CD4-positive, alpha-beta memory T cell (primary cell): ENCODE measurements at regions of chr3 and their contacts with region 1.

Region 1: GRCh38 chr3:48989796-48990635 is at the start of gene P4HTM:
- DNase-seq: peak; percentile 46 to 84 (median 54)
- H3K4me3 ChIP-seq: peak within 1 kb of the TSS; percentile 76 to 86
- H3K4me3 Mint-ChIP-seq: peak within 1 kb of the TSS; percentile 94 to 97 (median 94)
- H3K27ac ChIP-seq: peak within 1 kb of the TSS; percentile 65
- H3K27ac Mint-ChIP-seq: peak within 1 kb of the TSS; percentile 90 to 96 (median 93)
- H3K4me1 ChIP-seq: peaks cover 45% of the 10 kb centered on the region
- H3K4me1 Mint-ChIP-seq: peaks cover 30 to 57% (median 43%) of the 10 kb centered on the region in 4 donors
- H3K27me3 ChIP-seq: no peaks in the 10 kb centered on the region
- H3K27me3 Mint-ChIP-seq: no peaks in the 10 kb centered on the region
- total RNA-seq, gene P4HTM: 79.3 to 87.3 TPM

Region 2: GRCh38 chr3:48974076-48974864 is 15.7 kb before region 1 on chr3:
- CTCF ChIA-PET with region 1: interaction called, 10 read pairs
- POLR2A ChIA-PET with region 1: interaction called, 4 read pairs
- intact Hi-C with region 1: no loop called
- DNase-seq: no peak
- H3K4me3 ChIP-seq: no peak overlapping the region
- H3K4me3 Mint-ChIP-seq: no peak overlapping the region
- H3K27ac ChIP-seq: no peak overlapping the region
- H3K27ac Mint-ChIP-seq: peak overlapping the region in 2 of 7 donors; percentile 14 to 46
- H3K4me1 ChIP-seq: no peaks in the 10 kb centered on the region
- H3K4me1 Mint-ChIP-seq: peaks cover 0 to 8% (median 0%) of the 10 kb centered on the region in 4 donors
- H3K27me3 ChIP-seq: no peaks in the 10 kb centered on the region
- H3K27me3 Mint-ChIP-seq: no peaks in the 10 kb centered on the region

Region 3: GRCh38 chr3:49013755-49014628 is 24.0 kb after region 1 on chr3:
- CTCF ChIA-PET with region 1: interaction called, 216 read pairs
- POLR2A ChIA-PET with region 1: interaction called, 377 read pairs
- intact Hi-C with region 1: loop called (anchors 1 kb)
- DNase-seq: peak; percentile 39 to 59 (median 47)
- H3K4me3 ChIP-seq: no peak overlapping the region
- H3K4me3 Mint-ChIP-seq: peak overlapping the region in 1 of 8 donors; percentile 15
- H3K27ac ChIP-seq: no peak overlapping the region
- H3K27ac Mint-ChIP-seq: peak overlapping the region in 1 of 7 donors; percentile 48
- H3K4me1 ChIP-seq: peaks cover 18% of the 10 kb centered on the region
- H3K4me1 Mint-ChIP-seq: peaks cover 11 to 33% (median 20%) of the 10 kb centered on the region in 4 donors
- H3K27me3 ChIP-seq: no peaks in the 10 kb centered on the region
- H3K27me3 Mint-ChIP-seq: no peaks in the 10 kb centered on the region

Region 4: GRCh38 chr3:49028673-49029562 is 38.9 kb after region 1 on chr3 and contains the start of gene IMPDH2:
- CTCF ChIA-PET with region 1: interaction called, 216 read pairs
- POLR2A ChIA-PET with region 1: interaction called, 377 read pairs
- intact Hi-C with region 1: loop called (anchors 1 kb)
- DNase-seq: peak; percentile 91 to 93 (median 93)
- H3K4me3 ChIP-seq: peak within 1 kb of the TSS; percentile 64 to 77
- H3K4me3 Mint-ChIP-seq: peak within 1 kb of the TSS; percentile 90 to 97 (median 92)
- H3K27ac ChIP-seq: peak within 1 kb of the TSS; percentile 93
- H3K27ac Mint-ChIP-seq: peak within 1 kb of the TSS; percentile 94 to 100 (median 99)
- H3K4me1 ChIP-seq: peaks cover 21% of the 10 kb centered on the region
- H3K4me1 Mint-ChIP-seq: peaks cover 17 to 52% (median 24%) of the 10 kb centered on the region in 4 donors
- H3K27me3 ChIP-seq: no peaks in the 10 kb centered on the region
- H3K27me3 Mint-ChIP-seq: no peaks in the 10 kb centered on the region
- total RNA-seq, gene IMPDH2: 87.5 to 89.6 TPM

Region 5: DNA sequence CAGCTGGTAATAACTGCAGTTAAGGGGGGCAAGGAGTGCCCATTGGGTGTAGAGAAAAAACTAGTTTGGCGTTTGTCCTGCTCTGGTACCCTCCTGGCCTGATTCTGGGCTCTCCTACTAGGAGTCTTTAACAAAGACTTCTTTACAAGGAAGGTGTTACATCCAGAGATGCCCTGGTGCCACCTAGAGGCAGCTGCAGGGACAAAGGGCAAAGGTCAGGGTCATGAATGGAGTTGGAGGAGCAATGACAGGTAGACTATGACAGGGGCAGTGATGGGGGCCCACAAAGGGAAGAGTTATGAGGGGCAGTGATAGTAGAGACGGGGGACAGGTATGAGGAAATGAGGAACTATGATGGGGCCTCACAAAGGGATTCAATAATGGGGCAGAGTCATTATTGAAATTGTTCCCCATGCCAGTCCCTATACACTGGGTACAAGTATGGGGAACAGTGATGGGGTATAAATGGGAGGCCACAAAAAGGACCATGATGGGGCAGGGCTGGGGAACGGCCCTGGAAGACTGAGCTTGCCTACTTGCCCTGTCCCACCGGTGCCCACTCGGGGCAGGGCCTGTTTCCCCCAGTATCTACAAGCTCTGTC is 168.2 kb after region 1 on chr3:
- CTCF ChIA-PET with region 1: interaction called, 85 read pairs
- POLR2A ChIA-PET with region 1: interaction called, 18 read pairs
- intact Hi-C with region 1: loop called (anchors 1 kb)
- DNase-seq: peak; percentile 54 to 77 (median 63)
- H3K4me3 ChIP-seq: no peak overlapping the region
- H3K4me3 Mint-ChIP-seq: no peak overlapping the region
- H3K27ac ChIP-seq: no peak overlapping the region
- H3K27ac Mint-ChIP-seq: peak overlapping the region; percentile 8 to 91 (median 64)
- H3K4me1 ChIP-seq: no peaks in the 10 kb centered on the region
- H3K4me1 Mint-ChIP-seq: peaks cover 2 to 11% (median 5%) of the 10 kb centered on the region in 4 donors
- H3K27me3 ChIP-seq: no peaks in the 10 kb centered on the region
- H3K27me3 Mint-ChIP-seq: no peaks in the 10 kb centered on the region

Region 6: GRCh38 chr3:49305608-49306007 is 315.6 kb after region 1 on chr3:
- CTCF ChIA-PET with region 1: no interaction called
- POLR2A ChIA-PET with region 1: no interaction called
- intact Hi-C with region 1: no loop called
- DNase-seq: no peak
- H3K4me3 ChIP-seq: no peak overlapping the region
- H3K4me3 Mint-ChIP-seq: no peak overlapping the region
- H3K27ac ChIP-seq: no peak overlapping the region
- H3K27ac Mint-ChIP-seq: no peak overlapping the region
- H3K4me1 ChIP-seq: peaks cover 4% of the 10 kb centered on the region
- H3K4me1 Mint-ChIP-seq: peaks cover 0 to 7% (median 0%) of the 10 kb centered on the region in 4 donors
- H3K27me3 ChIP-seq: no peaks in the 10 kb centered on the region
- H3K27me3 Mint-ChIP-seq: no peaks in the 10 kb centered on the region

Region 7: GRCh38 chr3:49454458-49454857 is 464.4 kb after region 1 on chr3:
- CTCF ChIA-PET with region 1: interaction called, 3 read pairs
- POLR2A ChIA-PET with region 1: no interaction called
- intact Hi-C with region 1: loop called (anchors 1 kb)
- DNase-seq: no peak
- H3K4me3 ChIP-seq: no peak overlapping the region
- H3K4me3 Mint-ChIP-seq: no peak overlapping the region
- H3K27ac ChIP-seq: no peak overlapping the region
- H3K27ac Mint-ChIP-seq: peak overlapping the region in 2 of 7 donors; percentile 19 to 60
- H3K4me1 ChIP-seq: no peaks in the 10 kb centered on the region
- H3K4me1 Mint-ChIP-seq: no peaks in the 10 kb centered on the region
- H3K27me3 ChIP-seq: no peaks in the 10 kb centered on the region
- H3K27me3 Mint-ChIP-seq: peaks cover 0 to 3% of the 10 kb centered on the region in 2 donors